ENCODE measurements at regions of chr17 and their contacts with region 1.

Region 1: GRCh38 chr17:49997791-49998703 is 3.0 kb upstream of the DLX3 start:
- DNase-seq: peak; percentile 73 to 84
- H3K4me3 ChIP-seq: no peak overlapping the region
- H3K27ac ChIP-seq: no peak overlapping the region
- H3K4me1 ChIP-seq: peaks cover 0 to 9% of the 10 kb centered on the region in 2 donors
- H3K27me3 ChIP-seq: peaks cover 0 to 30% of the 10 kb centered on the region in 2 donors
- CTCF ChIP-seq: peak; percentile 75 to 95 (median 95)
- POLR2A ChIP-seq: no peak

Region 2: DNA sequence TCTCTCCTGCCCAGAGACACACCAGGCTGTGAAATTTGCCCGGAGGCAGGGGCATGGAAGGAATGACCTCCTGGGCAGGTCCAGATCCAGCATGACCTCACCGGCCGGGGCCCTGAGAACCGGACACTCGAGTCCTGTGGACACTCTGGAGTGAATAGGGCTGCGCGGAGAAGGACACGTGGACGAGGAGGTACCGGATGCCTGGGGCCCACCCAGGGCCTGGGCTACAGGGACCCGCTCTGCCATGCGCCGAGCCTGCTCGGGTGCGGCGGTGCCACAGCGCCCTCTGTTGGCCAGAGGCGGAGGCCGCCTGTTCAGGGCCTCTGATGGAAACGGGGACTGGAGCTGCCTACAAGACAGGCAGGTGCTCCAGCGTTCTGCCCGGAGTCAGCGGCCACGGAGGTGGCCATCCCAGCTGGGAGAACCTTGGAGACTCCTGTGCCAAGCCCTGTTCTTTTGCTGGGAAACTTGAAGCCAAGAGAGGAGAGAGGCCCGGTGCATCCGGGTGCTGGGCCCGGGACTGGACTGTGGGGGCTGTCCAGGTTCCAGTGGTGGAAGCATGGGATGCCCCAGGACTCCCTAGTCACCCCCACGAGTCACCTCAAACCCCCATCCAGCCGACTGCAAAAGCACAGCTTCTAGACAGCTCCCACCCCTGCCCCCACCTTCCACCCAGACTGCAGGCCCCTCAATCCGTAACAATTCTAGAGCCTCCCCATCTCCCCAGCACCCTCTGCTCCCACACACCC is 441.6 kb before region 1 on chr17:
- intact Hi-C with region 1: loop called (anchors 10 kb)
- DNase-seq: peak; percentile 73 to 80
- H3K4me3 ChIP-seq: no peak overlapping the region
- H3K27ac ChIP-seq: no peak overlapping the region
- H3K4me1 ChIP-seq: peaks cover 0 to 7% of the 10 kb centered on the region in 2 donors
- H3K27me3 ChIP-seq: no peaks in the 10 kb centered on the region
- CTCF ChIP-seq: peak; percentile 86 to 96 (median 95)
- POLR2A ChIP-seq: no peak

Region 3: GRCh38 chr17:49656247-49656646 is 341.8 kb before region 1 on chr17:
- intact Hi-C with region 1: no loop called
- DNase-seq: no peak
- H3K4me3 ChIP-seq: no peak overlapping the region
- H3K27ac ChIP-seq: no peak overlapping the region
- H3K4me1 ChIP-seq: no peaks in the 10 kb centered on the region
- H3K27me3 ChIP-seq: no peaks in the 10 kb centered on the region
- CTCF ChIP-seq: no peak
- POLR2A ChIP-seq: no peak

Region 4: GRCh38 chr17:49862781-49863331 is 135.2 kb before region 1 on chr17:
- intact Hi-C with region 1: loop called (anchors 1 kb)
- DNase-seq: no peak
- H3K4me3 ChIP-seq: no peak overlapping the region
- H3K27ac ChIP-seq: no peak overlapping the region
- H3K4me1 ChIP-seq: no peaks in the 10 kb centered on the region
- H3K27me3 ChIP-seq: no peaks in the 10 kb centered on the region
- CTCF ChIP-seq: no peak
- POLR2A ChIP-seq: no peak

Measured in breast epithelium (tissue), 4 donors.